ENCODE measurements at regions of chr7 and their contacts with region 1.

Region 1: GRCh38 chr7:129298268-129298893 is 73.6 kb downstream of the AHCYL2 start:
- DNase-seq: peak; percentile 3
- H3K4me3 ChIP-seq: no peak overlapping the region
- H3K27me3 ChIP-seq: no peaks in the 10 kb centered on the region
- CTCF ChIP-seq: peak; percentile 73

Region 2: DNA sequence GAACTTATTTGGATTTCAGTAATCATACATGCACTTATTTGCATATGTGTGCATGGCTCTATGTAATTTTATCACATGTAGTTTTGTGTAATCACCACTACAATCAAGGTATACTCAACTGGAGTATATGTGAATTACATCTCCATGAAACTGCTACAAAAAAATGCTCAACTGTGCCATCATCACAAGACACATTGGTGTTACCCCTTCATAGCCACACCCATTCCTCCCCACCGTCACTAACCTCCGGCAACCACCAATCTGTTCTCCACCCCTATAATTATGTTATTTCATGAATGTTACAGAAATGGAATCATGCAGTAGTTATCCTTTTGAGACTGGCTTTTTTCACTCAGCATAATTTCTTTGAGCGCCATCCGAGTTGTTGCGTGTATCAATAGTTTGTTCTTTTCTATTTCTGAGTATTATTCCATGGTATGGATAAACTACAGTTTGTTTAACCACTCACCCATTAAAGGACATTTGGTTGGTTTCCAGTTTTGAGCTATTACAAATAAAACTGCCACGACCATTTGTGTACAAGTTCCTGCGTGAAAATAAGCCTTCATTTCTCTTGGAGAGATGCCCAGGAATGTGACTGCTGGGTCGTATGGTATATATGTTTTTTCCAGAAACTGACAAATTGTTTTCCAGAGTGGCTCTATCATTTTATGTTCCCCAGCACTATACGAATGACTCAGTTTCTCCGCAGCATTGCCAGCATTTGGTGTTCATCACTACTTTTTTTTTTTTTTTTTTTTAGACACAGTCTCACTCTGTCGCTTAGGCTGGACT is 121.3 kb before region 1 on chr7:
- CTCF ChIA-PET with region 1: no interaction called
- POLR2A ChIA-PET with region 1: no interaction called
- DNase-seq: no peak
- H3K4me3 ChIP-seq: no peak overlapping the region
- H3K27me3 ChIP-seq: peaks cover 10% of the 10 kb centered on the region
- CTCF ChIP-seq: no peak

Region 3: GRCh38 chr7:129224251-129225205 is 73.9 kb before region 1 on chr7 and contains the start of gene AHCYL2:
- CTCF ChIA-PET with region 1: interaction called, 112 read pairs
- POLR2A ChIA-PET with region 1: no interaction called
- DNase-seq: peak; percentile 85
- H3K4me3 ChIP-seq: peak within 1 kb of the TSS; percentile 88
- H3K27me3 ChIP-seq: no peaks in the 10 kb centered on the region
- CTCF ChIP-seq: no peak
- polyA plus RNA-seq, gene AHCYL2: 7.8 and 11.4 TPM in 2 replicates

Measured in BJ (cell line).